Testis (tissue), 5 donors: ENCODE measurements at regions of chr9 and their contacts with region 1.

Region 1: DNA sequence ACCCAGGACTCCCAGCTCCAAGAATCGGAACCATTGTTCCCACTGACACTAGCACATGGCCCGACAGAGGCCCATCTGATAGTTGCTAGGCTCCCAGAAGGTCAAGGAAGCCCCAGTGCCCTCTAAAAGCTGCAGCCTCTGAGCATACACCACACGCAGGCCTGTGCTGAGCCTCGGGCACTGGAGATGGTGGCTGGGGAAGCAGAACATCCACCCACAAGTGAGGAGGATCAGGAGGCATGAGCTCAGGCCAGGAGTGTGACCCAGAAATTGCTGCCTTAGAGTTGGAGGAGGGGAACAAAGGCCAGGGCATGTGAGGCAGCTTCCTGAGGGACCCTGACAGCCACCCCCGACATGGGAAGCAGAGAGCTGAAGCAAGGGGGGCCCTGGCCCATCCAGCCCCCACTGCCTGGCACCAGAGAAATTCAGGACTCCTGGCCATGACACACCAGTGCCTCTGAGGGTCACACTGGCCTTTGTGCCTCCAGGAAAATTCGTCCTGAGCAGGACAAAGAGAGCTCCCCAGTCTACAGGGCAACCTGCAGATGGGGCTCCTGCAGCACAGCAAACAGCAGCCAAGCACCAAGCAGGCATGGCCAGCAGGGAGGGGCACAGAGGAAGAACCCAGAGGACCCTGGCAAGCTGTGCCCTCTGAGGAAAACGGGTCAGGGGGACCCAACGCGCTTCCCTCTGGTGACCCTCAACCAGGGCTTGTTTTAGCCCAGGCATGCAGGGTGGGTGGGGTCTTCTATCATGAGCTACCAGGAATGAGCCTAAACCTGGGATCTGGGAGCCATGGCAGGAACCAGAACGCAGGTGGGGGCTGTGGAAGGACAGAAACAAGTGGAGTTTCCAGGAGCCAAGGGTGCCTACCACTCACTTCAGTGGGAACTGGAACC is 21.2 kb downstream of the IPPK start:
- DNase-seq: no peak
- H3K4me3 ChIP-seq: no peak overlapping the region
- H3K27ac ChIP-seq: no peak overlapping the region
- H3K4me1 ChIP-seq: peaks cover 11% of the 10 kb centered on the region
- H3K27me3 ChIP-seq: no peaks in the 10 kb centered on the region
- CTCF ChIP-seq: no peak
- POLR2A ChIP-seq: no peak

Region 2: DNA sequence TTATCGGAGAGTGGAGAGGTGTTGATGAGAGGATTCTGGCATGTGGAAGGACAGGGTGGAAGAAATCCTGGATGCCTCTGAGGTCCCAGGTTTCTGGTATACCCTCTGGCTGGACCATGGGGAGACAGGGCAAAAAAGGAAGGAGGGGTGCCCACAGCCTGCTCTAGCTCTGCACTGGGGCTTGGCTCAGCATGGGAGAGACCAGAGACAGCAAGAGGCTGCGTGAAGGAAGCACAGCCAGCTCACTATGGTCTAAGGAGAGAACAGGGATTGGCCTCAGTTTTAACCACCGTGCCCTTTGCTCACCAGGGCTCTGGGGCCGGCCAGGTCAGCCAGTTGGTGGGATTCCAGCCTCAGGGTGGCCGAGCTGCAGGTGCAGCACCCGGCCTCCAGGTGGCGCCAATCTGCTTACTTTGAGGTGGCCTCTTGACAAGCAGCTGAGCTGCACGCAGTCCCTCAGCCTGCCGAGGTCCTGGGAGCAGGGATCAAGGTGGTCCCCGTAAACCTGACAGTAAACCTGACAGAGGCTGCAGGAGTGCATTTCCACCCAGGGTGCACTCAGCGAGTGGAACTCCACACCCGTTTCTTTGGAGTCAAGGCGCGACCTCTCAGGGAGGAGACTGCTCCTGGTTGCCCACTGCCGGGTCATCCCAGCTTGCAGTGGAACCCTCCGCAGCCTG is 508.5 kb before region 1 on chr9:
- intact Hi-C with region 1: loop called (anchors 10 kb)
- DNase-seq: peak; percentile 90
- H3K4me3 ChIP-seq: peak overlapping the region; percentile 45 to 57
- H3K27ac ChIP-seq: no peak overlapping the region
- H3K4me1 ChIP-seq: peaks cover 11% of the 10 kb centered on the region
- H3K27me3 ChIP-seq: no peaks in the 10 kb centered on the region
- CTCF ChIP-seq: peak; percentile 77 to 96 (median 93)
- POLR2A ChIP-seq: no peak

Region 3: DNA sequence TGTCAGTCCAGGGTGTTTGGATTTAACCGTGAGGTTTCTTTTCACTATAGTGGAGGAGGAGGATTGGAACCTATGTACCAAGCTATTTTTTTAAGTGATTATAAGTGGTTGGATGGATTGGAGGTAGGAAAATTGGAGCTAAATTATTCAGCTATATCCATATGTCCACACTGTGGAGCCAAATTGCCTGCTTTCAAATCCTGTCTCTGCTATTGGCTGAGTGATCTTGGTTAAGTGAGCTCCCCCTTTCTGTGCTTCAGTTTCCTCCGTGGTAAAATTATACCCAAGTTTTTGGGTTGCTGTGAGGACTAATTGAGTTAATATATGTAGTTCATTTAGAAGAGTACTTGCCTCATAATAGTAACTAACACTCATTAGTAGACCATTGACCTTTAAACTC is 320.5 kb before region 1 on chr9:
- intact Hi-C with region 1: no loop called
- DNase-seq: no peak
- H3K4me3 ChIP-seq: no peak overlapping the region
- H3K27ac ChIP-seq: no peak overlapping the region
- H3K4me1 ChIP-seq: peaks cover 13% of the 10 kb centered on the region
- H3K27me3 ChIP-seq: no peaks in the 10 kb centered on the region
- CTCF ChIP-seq: no peak
- POLR2A ChIP-seq: no peak

Region 4: GRCh38 chr9:92342825-92343488 is 305.8 kb before region 1 on chr9:
- intact Hi-C with region 1: loop called (anchors 10 kb)
- DNase-seq: no peak
- H3K4me3 ChIP-seq: no peak overlapping the region
- H3K27ac ChIP-seq: no peak overlapping the region
- H3K4me1 ChIP-seq: no peaks in the 10 kb centered on the region
- H3K27me3 ChIP-seq: no peaks in the 10 kb centered on the region
- CTCF ChIP-seq: peak in 1 of 3 experiments; percentile 4
- POLR2A ChIP-seq: no peak